HEK293 (cell line): ENCODE measurements at regions of chr2 and their contacts with region 1.

Region 1: GRCh38 chr2:30165050-30165520 is 18.3 kb downstream of the YPEL5 start:
- H3K4me3 ChIP-seq: no peak overlapping the region
- H3K27ac ChIP-seq: no peak overlapping the region
- H3K4me1 ChIP-seq: no peaks in the 10 kb centered on the region
- CTCF ChIP-seq: peak; percentile 90

Region 2: DNA sequence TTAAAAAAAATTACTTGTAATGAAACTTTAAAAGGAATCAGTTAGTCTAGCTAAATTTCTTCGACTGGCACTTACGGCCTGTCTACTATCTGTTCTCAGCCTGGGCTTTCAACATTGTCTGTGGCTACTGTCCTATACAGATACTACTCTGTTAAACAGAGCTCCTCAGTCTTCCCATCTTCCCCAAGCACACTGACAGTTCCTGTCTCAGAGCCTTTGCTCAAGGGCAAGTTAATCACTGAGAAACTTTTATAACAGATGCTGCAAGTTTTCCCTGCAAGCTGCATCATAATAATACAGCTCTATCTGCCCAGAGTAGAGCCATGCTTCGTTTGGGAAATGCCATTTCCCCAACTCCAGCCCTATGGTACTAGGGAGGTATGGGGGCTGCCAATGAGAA is 29.5 kb before region 1 on chr2:
- CTCF ChIA-PET with region 1: no interaction called
- POLR2A ChIA-PET with region 1: no interaction called
- H3K4me3 ChIP-seq: no peak overlapping the region
- H3K27ac ChIP-seq: no peak overlapping the region
- H3K4me1 ChIP-seq: no peaks in the 10 kb centered on the region
- CTCF ChIP-seq: no peak

Region 3: DNA sequence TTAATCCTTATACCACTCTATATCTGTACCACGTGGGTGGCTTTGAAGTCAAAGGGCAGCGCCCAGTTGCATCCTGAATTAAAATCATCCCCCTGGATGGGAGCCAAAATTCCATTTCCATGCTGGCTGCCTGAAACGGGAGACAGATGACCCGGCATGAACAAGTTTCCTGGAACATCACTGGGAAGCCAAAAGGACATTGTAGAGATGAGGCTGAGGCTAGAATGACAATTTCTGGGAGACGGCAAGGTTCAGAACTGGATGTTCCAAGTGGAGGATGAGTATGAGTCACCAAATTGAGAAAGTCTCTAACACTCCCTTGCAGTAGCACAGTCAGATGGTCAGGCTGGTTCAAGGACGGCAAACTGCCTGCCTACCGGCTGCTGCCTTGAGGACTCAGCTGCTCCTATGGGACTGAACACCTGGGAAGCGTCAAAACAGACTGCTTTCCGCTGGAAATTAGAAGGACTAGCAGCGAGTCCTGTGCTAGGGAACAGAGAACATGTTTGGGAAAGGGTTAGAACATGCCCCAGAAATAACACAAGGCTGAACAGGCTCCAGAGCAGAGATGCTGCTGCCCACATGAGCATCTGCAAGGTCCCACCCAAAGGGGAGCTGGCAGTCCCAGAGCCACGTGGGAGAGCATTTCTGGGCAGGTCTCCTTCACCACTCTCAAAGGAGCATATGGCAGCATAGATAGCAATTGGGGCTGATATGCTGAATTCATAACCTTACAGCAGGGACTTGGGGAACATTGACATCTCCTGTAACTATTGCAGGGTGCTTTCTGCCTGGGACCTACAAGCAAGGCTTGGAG is 13.7 kb after region 1 on chr2:
- CTCF ChIA-PET with region 1: interaction called, 31 read pairs
- POLR2A ChIA-PET with region 1: no interaction called
- H3K4me3 ChIP-seq: no peak overlapping the region
- H3K27ac ChIP-seq: no peak overlapping the region
- H3K4me1 ChIP-seq: no peaks in the 10 kb centered on the region
- CTCF ChIP-seq: no peak

Region 4: GRCh38 chr2:30193104-30193681 is 28.1 kb after region 1 on chr2:
- CTCF ChIA-PET with region 1: interaction called, 13 read pairs
- POLR2A ChIA-PET with region 1: no interaction called
- H3K4me3 ChIP-seq: no peak overlapping the region
- H3K27ac ChIP-seq: no peak overlapping the region
- H3K4me1 ChIP-seq: no peaks in the 10 kb centered on the region
- CTCF ChIP-seq: no peak

Region 5: GRCh38 chr2:30239308-30239985 is 74.4 kb after region 1 on chr2:
- CTCF ChIA-PET with region 1: interaction called, 10 read pairs
- POLR2A ChIA-PET with region 1: no interaction called
- H3K4me3 ChIP-seq: no peak overlapping the region
- H3K27ac ChIP-seq: no peak overlapping the region
- H3K4me1 ChIP-seq: no peaks in the 10 kb centered on the region
- CTCF ChIP-seq: peak; percentile 51; the same call in 1 of the 2 replicates